Activated B cell treated with CpG ODN at 0.5 μM for 24 hours (primary cell): ENCODE measurements at regions of chr12 and their contacts with region 1.

Region 1: GRCh38 chr12:6723607-6724396 is at the start of gene COPS7A:
- DNase-seq: peak; percentile 92
- ATAC-seq: peak; percentile 93
- H3K4me3 Mint-ChIP-seq: peak within 1 kb of the TSS; percentile 89
- H3K27ac Mint-ChIP-seq: peak within 1 kb of the TSS; percentile 96
- H3K4me1 Mint-ChIP-seq: peaks cover 19% of the 10 kb centered on the region
- H3K27me3 Mint-ChIP-seq: no peaks in the 10 kb centered on the region
- CTCF ChIP-seq: no peak
- total RNA-seq, gene COPS7A: 28.1 and 35.8 TPM in 2 replicates

Region 2: GRCh38 chr12:6451348-6452244 is 272.2 kb before region 1 on chr12 and contains the start of gene TAPBPL:
- CTCF ChIA-PET with region 1: no interaction called
- POLR2A ChIA-PET with region 1: interaction called, 12 read pairs
- intact Hi-C with region 1: no loop called
- DNase-seq: peak; percentile 62
- ATAC-seq: peak; percentile 86
- H3K4me3 Mint-ChIP-seq: peak within 1 kb of the TSS; percentile 97
- H3K27ac Mint-ChIP-seq: peak within 1 kb of the TSS; percentile 99
- H3K4me1 Mint-ChIP-seq: peaks cover 58% of the 10 kb centered on the region
- H3K27me3 Mint-ChIP-seq: no peaks in the 10 kb centered on the region
- CTCF ChIP-seq: no peak
- total RNA-seq, gene TAPBPL: 52.5 and 64.0 TPM in 2 replicates

Region 3: GRCh38 chr12:6607751-6608591 is 115.8 kb before region 1 on chr12:
- CTCF ChIA-PET with region 1: no interaction called
- POLR2A ChIA-PET with region 1: interaction called, 33 read pairs
- intact Hi-C with region 1: loop called (anchors 1 kb)
- DNase-seq: no peak
- ATAC-seq: peak; percentile 31
- H3K4me3 Mint-ChIP-seq: no peak overlapping the region
- H3K27ac Mint-ChIP-seq: no peak overlapping the region
- H3K4me1 Mint-ChIP-seq: peaks cover 64% of the 10 kb centered on the region
- H3K27me3 Mint-ChIP-seq: no peaks in the 10 kb centered on the region
- CTCF ChIP-seq: no peak

Region 4: GRCh38 chr12:6662906-6663742 is 60.7 kb before region 1 on chr12 and contains the start of gene ING4:
- CTCF ChIA-PET with region 1: no interaction called
- POLR2A ChIA-PET with region 1: interaction called, 16 read pairs
- intact Hi-C with region 1: loop called (anchors 1 kb)
- DNase-seq: peak; percentile 80
- ATAC-seq: peak; percentile 97
- H3K4me3 Mint-ChIP-seq: peak within 1 kb of the TSS; percentile 97
- H3K27ac Mint-ChIP-seq: peak within 1 kb of the TSS; percentile 95
- H3K4me1 Mint-ChIP-seq: peaks cover 27% of the 10 kb centered on the region
- H3K27me3 Mint-ChIP-seq: no peaks in the 10 kb centered on the region
- CTCF ChIP-seq: no peak
- total RNA-seq, gene ING4: 31.6 and 39.2 TPM in 2 replicates

Region 5: DNA sequence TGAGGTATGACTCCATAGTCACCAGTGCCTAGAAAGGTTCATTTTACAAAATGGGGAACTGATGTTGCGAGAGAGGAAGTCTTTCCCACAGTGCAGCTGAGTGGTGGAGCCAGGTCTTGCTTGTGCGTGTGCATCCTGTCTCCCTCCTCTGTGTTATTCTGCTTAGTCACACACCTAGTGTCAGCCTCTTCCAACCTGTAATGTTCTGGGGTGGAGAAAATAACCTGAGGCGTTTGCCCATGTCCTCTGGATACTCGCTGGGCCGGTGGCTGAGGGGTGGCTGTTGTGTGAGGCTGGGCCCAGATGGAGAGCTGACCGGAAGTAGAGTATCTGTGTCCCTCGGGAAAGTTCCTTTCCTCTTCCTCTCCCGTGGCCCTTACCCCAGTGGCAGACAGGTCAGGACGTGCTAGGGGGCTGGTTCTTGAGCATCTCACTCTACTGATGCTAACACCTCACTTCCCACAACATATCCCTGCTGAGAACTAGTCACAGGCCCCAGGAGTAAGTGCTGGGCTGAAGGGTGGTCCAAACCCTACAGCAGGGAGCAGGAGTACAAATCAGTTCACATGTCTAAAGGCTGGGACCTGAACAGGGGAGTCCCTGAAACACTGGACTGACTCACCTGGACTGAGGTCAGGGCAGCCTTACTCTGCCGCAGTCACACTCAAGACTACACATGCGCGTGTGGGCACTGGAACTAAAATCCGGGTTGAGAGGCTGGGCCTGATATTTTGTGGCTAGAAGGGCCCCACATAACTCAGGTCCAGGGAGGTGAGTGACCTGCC is 22.1 kb after region 1 on chr12:
- CTCF ChIA-PET with region 1: interaction called, 4 read pairs
- POLR2A ChIA-PET with region 1: interaction called, 18 read pairs
- intact Hi-C with region 1: loop called (anchors 1 kb)
- DNase-seq: peak; percentile 25
- ATAC-seq: peak; percentile 96
- H3K4me3 Mint-ChIP-seq: peak overlapping the region; percentile 53
- H3K27ac Mint-ChIP-seq: peak overlapping the region; percentile 95
- H3K4me1 Mint-ChIP-seq: peaks cover 23% of the 10 kb centered on the region
- H3K27me3 Mint-ChIP-seq: no peaks in the 10 kb centered on the region
- CTCF ChIP-seq: no peak

Region 6: DNA sequence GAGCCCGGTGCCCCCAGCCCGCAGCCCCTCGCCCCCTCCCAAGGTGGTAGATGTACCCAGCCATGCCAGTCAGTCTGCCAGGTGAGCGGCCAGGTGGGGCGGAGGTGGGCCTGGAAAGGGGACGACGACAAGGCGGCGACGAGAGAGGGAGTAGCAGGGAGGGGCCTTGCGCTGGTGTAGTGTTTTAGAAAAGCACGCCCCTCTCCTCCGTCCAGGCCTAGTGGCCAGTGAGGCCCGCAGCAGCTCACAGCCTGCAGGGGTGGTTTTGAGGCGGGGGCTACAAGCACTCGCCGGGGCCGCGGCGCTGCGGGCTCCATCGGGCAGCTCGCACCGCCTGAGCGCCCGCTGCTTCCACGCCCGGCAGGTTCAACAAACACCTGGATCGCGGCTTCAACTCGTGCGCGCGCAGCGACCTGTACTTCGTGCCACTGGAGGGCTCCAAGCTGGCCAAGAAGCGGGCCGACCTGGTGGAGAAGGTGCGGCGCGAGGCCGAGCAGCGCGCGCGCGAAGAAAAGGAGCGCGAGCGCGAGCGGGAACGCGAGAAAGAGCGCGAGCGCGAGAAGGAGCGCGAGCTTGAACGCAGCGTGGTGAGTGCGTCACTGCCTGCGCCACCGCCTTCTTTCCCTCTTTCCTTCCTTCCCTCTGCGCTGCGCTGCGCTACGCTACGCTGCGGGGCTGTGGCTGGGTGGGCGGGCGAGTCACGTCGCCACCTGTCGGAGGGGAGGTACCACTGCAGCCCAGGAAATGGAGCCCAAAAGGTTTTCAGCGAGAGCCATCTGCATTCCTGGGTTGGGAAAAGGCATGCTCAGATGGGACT is 213.9 kb after region 1 on chr12:
- CTCF ChIA-PET with region 1: no interaction called
- POLR2A ChIA-PET with region 1: interaction called, 17 read pairs
- intact Hi-C with region 1: no loop called
- DNase-seq: peak; percentile 84
- ATAC-seq: peak; percentile 92
- H3K4me3 Mint-ChIP-seq: peak overlapping the region; percentile 84
- H3K27ac Mint-ChIP-seq: peak overlapping the region; percentile 91
- H3K4me1 Mint-ChIP-seq: peaks cover 35% of the 10 kb centered on the region
- H3K27me3 Mint-ChIP-seq: no peaks in the 10 kb centered on the region
- CTCF ChIP-seq: no peak

Region 7: DNA sequence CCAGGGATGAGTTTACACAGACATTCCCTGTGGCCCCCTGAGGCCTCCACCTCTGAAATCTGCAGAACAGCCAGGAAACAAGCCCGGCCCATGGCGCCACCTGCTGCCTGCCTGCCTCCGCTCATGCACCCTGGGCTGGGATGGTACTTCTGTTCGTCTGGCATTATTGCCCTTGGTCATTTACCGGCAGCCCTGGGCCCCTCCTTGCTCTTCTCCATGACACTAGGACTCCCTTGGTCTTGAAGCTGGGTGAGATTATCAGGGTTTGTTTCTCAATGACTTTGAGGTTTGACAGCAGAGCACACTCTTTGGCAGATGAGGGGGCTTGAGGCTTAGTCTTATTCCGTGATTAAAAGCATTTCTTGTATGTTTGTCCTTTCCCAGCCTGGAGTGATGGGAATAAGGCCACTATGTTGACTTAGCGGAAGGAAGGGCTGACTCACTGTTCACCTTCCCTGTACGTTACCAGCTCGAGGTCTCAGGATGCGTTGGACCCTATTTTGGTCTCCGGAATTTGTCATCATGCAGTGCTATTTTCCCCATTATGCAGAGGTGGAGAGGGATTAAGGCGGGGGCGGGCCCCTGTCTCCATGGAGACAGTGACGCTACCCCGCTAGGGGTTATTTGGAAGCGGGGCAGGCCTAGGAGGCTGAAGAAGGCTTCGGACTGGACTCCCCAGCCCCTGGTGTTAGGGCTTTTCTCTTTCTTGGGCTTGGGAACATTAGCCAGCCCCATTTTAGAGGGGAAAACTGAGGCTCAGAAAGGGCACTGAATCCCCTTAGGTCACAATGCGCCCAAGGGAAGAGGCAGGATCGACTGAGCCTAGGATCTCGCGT is 465.0 kb after region 1 on chr12:
- CTCF ChIA-PET with region 1: no interaction called
- POLR2A ChIA-PET with region 1: no interaction called
- intact Hi-C with region 1: loop called (anchors 1 kb)
- DNase-seq: peak; percentile 46
- ATAC-seq: peak; percentile 39
- H3K4me3 Mint-ChIP-seq: peak overlapping the region; percentile 92
- H3K27ac Mint-ChIP-seq: peak overlapping the region; percentile 91
- H3K4me1 Mint-ChIP-seq: peaks cover 31% of the 10 kb centered on the region
- H3K27me3 Mint-ChIP-seq: no peaks in the 10 kb centered on the region
- CTCF ChIP-seq: no peak